B cell (primary cell): ENCODE measurements at regions of chr22 and their contacts with region 1.

Region 1: DNA sequence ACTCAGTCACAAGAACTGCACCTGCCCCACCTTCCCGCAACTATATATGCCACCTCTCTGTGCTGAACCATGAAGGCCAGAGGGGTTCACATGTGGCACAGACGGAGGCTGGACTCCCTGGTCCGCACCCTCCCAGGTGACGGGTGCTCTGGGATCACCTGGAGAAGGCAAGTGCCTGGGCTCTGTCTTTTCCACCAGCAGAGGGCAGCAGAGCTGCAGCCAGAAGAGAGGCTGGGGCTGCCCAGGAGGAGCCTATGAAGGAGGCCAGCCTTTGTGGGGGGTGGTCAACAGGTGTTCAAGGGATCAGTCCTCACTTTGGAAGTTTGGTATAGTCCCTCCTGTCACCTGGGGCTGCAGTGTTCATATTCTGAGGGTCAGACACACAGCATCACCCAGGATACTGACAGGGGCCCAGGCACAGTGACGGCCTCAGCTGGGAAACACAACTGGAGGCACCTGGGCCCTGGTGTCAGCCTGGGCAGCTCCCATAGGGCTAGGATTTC is 39.2 kb upstream of the IGLL5 start:
- DNase-seq: peak; percentile 83
- ATAC-seq: peak; percentile 77
- H3K4me3 ChIP-seq: no peak overlapping the region
- H3K4me3 Mint-ChIP-seq: no peak overlapping the region
- H3K27ac ChIP-seq: no peak overlapping the region
- H3K27ac Mint-ChIP-seq: peak overlapping the region; percentile 32
- H3K4me1 ChIP-seq: peaks cover 28 to 29% of the 10 kb centered on the region in 2 donors
- H3K4me1 Mint-ChIP-seq: peaks cover 29% of the 10 kb centered on the region
- H3K27me3 ChIP-seq: peaks cover 0 to 3% (median 0%) of the 10 kb centered on the region in 4 experiments
- H3K27me3 Mint-ChIP-seq: peaks cover 16% of the 10 kb centered on the region
- CTCF ChIP-seq: peak; percentile 87

Region 2: GRCh38 chr22:22748297-22748743 is 100.1 kb before region 1 on chr22:
- CTCF ChIA-PET with region 1: interaction called, 14 read pairs
- POLR2A ChIA-PET with region 1: no interaction called
- intact Hi-C with region 1: no loop called
- DNase-seq: peak; percentile 67
- ATAC-seq: peak; percentile 26
- H3K4me3 ChIP-seq: no peak overlapping the region
- H3K4me3 Mint-ChIP-seq: peak overlapping the region; percentile 26
- H3K27ac ChIP-seq: no peak overlapping the region
- H3K27ac Mint-ChIP-seq: peak overlapping the region; percentile 13
- H3K4me1 ChIP-seq: peaks cover 40 to 47% of the 10 kb centered on the region in 2 donors
- H3K4me1 Mint-ChIP-seq: peaks cover 51% of the 10 kb centered on the region
- H3K27me3 ChIP-seq: no peaks in the 10 kb centered on the region
- H3K27me3 Mint-ChIP-seq: no peaks in the 10 kb centered on the region
- CTCF ChIP-seq: no peak

Region 3: DNA sequence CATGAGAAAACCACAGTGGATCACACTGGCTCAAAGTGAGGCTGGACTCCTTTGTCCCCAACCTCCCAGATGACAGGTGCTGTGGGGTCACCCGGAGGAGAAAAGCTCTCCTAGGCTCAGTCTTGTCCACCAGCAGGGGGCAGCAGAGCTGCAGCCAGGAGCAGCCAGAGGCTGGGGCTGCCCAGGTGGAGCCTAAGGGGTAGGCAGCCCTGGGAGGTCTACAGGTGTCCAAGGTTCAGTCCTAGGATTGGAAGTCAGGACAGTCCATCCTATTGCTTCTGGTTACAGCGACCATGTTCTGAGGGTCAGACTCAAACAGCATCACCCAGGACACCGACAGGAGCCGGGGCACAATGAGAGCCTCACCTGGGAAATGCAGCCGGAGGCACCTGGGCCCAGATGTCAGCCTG is 38.4 kb before region 1 on chr22:
- CTCF ChIA-PET with region 1: interaction called, 47 read pairs
- POLR2A ChIA-PET with region 1: no interaction called
- intact Hi-C with region 1: loop called (anchors 5 kb)
- DNase-seq: peak; percentile 84
- ATAC-seq: peak; percentile 76
- H3K4me3 ChIP-seq: peak overlapping the region in 1 of 5 experiments; percentile 1
- H3K4me3 Mint-ChIP-seq: no peak overlapping the region
- H3K27ac ChIP-seq: no peak overlapping the region
- H3K27ac Mint-ChIP-seq: no peak overlapping the region
- H3K4me1 ChIP-seq: peaks cover 9 to 26% of the 10 kb centered on the region in 2 donors
- H3K4me1 Mint-ChIP-seq: peaks cover 24% of the 10 kb centered on the region
- H3K27me3 ChIP-seq: peaks cover 0 to 9% (median 0%) of the 10 kb centered on the region in 4 experiments
- H3K27me3 Mint-ChIP-seq: peaks cover 12% of the 10 kb centered on the region
- CTCF ChIP-seq: peak; percentile 91

Region 4: GRCh38 chr22:22838148-22838786 is 10.1 kb before region 1 on chr22:
- CTCF ChIA-PET with region 1: interaction called, 20 read pairs
- POLR2A ChIA-PET with region 1: no interaction called
- intact Hi-C with region 1: no loop called
- DNase-seq: peak; percentile 47
- ATAC-seq: peak; percentile 54
- H3K4me3 ChIP-seq: no peak overlapping the region
- H3K4me3 Mint-ChIP-seq: peak overlapping the region; percentile 29
- H3K27ac ChIP-seq: no peak overlapping the region
- H3K27ac Mint-ChIP-seq: peak overlapping the region; percentile 2
- H3K4me1 ChIP-seq: peaks cover 12 to 16% of the 10 kb centered on the region in 2 donors
- H3K4me1 Mint-ChIP-seq: peaks cover 18% of the 10 kb centered on the region
- H3K27me3 ChIP-seq: peaks cover 0 to 5% (median 0%) of the 10 kb centered on the region in 4 experiments
- H3K27me3 Mint-ChIP-seq: peaks cover 27% of the 10 kb centered on the region
- CTCF ChIP-seq: no peak

Region 5: DNA sequence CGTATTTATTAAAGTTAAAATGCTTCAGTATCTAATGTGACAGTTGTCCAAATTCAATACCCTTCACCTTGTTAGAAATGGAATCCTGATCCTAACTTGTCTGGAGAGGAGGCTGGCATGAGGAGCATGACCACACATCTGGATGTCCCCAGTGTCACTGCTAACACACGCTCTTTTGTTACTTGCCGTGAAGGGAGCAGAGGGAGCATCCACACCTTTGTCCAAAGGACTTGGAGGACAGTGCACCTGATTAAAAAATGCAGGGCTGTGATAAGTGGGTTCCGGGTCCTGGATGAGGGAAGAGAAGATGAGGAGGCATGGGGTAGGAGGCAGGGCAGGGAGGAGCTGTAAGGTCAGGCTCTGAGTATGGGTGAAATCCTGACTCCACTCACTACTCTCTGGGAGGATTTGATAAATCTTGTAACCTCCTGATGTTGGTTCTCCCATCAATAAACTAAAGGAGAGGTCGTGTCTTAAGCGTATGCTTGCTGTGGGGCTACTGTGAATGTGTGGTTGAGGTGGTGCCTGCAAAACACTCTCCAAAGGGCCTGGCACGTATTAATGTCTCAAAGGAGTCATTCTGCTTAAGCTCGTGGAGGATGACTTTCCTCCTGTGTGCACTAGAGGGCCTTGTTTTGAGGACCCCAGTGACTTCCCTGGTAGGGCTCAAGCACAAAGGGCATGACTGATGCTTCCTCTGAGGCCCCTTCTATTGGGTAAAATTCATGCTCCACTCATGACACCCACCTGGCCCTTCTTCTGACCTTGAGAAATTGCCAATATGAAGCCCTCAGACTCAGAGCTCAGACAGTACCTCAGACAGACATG is 22.4 kb after region 1 on chr22:
- CTCF ChIA-PET with region 1: interaction called, 31 read pairs
- POLR2A ChIA-PET with region 1: no interaction called
- intact Hi-C with region 1: no loop called
- DNase-seq: peak; percentile 54
- ATAC-seq: peak; percentile 56
- H3K4me3 ChIP-seq: no peak overlapping the region
- H3K4me3 Mint-ChIP-seq: no peak overlapping the region
- H3K27ac ChIP-seq: no peak overlapping the region
- H3K27ac Mint-ChIP-seq: no peak overlapping the region
- H3K4me1 ChIP-seq: peaks cover 33 to 40% of the 10 kb centered on the region in 2 donors
- H3K4me1 Mint-ChIP-seq: peaks cover 39% of the 10 kb centered on the region
- H3K27me3 ChIP-seq: peaks cover 0 to 6% (median 3%) of the 10 kb centered on the region in 4 experiments
- H3K27me3 Mint-ChIP-seq: peaks cover 3% of the 10 kb centered on the region
- CTCF ChIP-seq: peak; percentile 44

Region 6: DNA sequence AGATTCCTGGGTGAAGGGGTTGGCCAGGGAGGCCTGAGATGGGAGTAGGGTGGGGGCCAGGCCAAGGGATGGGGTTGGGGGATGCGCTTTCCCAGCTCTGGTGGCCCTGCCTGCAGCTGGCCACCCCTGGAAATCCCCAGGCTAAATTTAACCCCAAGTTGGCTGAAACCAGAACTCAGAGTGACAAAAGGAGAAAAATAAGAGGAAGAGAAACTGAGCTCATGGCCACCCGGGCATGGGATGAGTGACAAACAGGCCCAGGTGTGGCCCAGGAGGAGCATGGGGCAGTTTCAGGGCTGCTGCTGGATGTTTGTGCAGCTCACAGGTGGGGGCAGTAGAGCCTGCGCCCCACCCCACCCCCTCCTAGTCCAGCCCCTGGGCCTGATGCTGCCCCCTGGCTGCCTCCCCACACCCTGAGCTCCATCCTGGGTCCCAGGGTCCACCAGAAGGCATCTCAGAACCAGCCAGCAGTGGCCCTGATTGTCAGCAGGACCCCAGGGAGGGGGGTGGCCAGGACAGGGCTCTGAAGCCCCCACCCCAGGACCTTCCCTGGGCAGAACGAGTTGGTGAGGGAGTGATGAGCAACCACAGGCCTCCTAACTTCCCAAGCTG is 87.2 kb after region 1 on chr22:
- CTCF ChIA-PET with region 1: interaction called, 91 read pairs
- POLR2A ChIA-PET with region 1: no interaction called
- intact Hi-C with region 1: no loop called
- DNase-seq: peak; percentile 97
- ATAC-seq: peak; percentile 89
- H3K4me3 ChIP-seq: peak overlapping the region in 2 of 5 experiments; percentile 7 to 37
- H3K4me3 Mint-ChIP-seq: peak overlapping the region; percentile 71
- H3K27ac ChIP-seq: peak overlapping the region; percentile 94 to 99
- H3K27ac Mint-ChIP-seq: peak overlapping the region; percentile 95
- H3K4me1 ChIP-seq: peaks cover 98 to 100% of the 10 kb centered on the region in 2 donors
- H3K4me1 Mint-ChIP-seq: peaks cover 98% of the 10 kb centered on the region
- H3K27me3 ChIP-seq: no peaks in the 10 kb centered on the region
- H3K27me3 Mint-ChIP-seq: no peaks in the 10 kb centered on the region
- CTCF ChIP-seq: peak; percentile 75